Right cardiac atrium (tissue), 5 donors: ENCODE measurements at regions of chr20 and their contacts with region 1.

Region 1: DNA sequence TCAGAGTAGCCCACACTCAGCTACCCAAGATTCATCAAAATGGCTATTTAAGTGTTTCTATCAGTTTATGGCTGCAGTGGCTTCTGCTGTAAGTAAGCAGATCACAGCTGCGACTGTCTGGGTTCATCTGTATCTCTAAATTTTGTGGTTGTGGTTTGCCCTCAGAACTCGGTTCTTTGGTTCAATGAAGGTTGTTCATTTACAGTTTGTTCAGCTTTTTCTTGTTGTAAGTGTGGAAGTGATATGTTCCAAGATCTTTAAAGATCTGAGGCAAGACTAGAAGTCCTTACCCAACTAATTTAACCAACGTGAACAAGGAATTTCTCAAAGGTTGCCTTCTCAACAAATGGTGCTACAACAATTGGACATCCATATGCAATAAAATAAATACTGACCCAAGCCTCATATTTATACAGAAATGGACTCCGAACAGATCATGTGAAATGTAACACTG is 284.3 kb downstream of the DOK5 start:
- DNase-seq: no peak
- ATAC-seq: no peak
- H3K4me3 ChIP-seq: no peak overlapping the region
- H3K27ac ChIP-seq: no peak overlapping the region
- H3K4me1 ChIP-seq: no peaks in the 10 kb centered on the region
- H3K27me3 ChIP-seq: no peaks in the 10 kb centered on the region

Region 2: GRCh38 chr20:54320115-54320607 is 439.6 kb before region 1 on chr20:
- intact Hi-C with region 1: no loop called
- DNase-seq: no peak
- ATAC-seq: no peak
- H3K4me3 ChIP-seq: no peak overlapping the region
- H3K27ac ChIP-seq: no peak overlapping the region
- H3K4me1 ChIP-seq: peaks cover 2% of the 10 kb centered on the region
- H3K27me3 ChIP-seq: no peaks in the 10 kb centered on the region

Region 3: DNA sequence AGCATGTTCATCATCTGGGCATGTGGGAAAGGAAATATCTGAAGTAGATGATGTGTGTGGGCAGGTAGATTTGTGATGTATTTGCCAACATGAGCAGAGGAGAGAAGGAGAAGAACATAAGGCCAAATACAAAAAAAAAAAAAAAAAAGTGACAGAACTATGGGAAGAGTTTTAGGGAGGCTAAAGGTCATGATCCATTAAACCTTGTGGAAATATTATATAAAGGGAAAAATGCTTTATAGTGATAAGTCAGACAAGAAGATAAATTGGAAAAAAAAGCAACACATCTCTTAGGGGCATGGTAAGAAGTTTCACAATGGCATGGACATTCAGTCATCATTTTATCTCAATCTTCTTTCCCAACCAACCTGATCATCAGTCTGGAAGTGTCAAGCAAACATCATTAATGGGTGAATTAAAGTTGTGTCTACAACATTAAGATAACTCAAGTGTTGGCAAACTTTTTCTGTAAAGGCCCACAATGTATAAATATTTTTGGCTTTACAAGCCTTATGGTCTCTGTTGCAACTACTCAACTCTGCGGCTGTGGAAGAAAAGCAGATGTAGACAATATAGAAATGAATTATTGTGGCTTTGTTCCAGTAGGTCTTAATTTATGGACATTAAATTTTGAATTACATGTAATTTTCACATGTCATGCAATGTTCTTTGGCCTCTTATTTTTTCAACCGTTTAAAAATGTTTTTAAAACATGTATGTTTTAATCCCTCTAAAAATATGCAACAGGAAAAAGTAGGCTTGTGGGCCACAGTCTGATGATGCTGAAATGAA is 52.5 kb before region 1 on chr20:
- intact Hi-C with region 1: loop called in 1 of 4 experiments (anchors 10 kb)
- DNase-seq: no peak
- ATAC-seq: no peak
- H3K4me3 ChIP-seq: no peak overlapping the region
- H3K27ac ChIP-seq: no peak overlapping the region
- H3K4me1 ChIP-seq: no peaks in the 10 kb centered on the region
- H3K27me3 ChIP-seq: no peaks in the 10 kb centered on the region

Region 4: DNA sequence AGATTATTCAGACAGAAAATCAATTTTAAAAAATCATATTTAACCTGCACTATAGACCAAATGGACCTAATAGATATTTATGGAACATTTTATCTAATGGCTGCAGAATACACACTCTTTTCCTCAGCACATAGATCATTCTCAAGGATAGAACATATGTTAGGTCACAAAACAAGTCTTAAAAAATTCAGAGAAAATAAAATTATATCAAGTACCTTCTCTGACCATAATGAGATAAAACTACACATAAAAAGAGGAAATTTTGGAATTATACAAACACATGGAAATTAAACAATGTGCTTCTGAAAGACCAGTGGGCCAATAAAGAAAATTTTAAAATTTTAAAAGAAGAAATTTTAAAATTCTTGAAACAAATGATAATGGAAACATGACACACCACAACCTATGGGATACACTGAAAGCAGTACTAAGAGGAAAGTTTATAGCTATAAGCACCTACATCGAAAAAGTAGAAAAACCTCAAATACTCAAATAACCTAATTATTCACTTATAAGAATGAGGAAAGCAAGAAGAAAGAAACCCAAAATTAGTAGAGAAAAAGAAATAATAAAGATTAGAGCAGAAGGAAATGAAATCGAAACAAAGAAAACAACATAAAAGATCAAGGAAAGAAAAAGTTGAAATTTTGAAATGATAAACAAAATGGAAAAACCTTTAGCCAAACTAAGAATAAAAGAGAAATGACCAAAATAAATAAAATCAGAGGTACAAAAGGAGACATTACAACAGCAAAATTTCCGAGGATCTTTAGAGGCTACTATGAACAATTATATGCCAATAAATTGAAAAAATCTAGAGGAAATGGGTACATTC is 145.0 kb after region 1 on chr20:
- intact Hi-C with region 1: no loop called
- DNase-seq: no peak
- ATAC-seq: no peak
- H3K4me3 ChIP-seq: no peak overlapping the region
- H3K27ac ChIP-seq: no peak overlapping the region
- H3K4me1 ChIP-seq: no peaks in the 10 kb centered on the region
- H3K27me3 ChIP-seq: no peaks in the 10 kb centered on the region

Region 5: GRCh38 chr20:55079917-55080316 is 320.2 kb after region 1 on chr20:
- intact Hi-C with region 1: no loop called
- DNase-seq: no peak
- ATAC-seq: no peak
- H3K4me3 ChIP-seq: no peak overlapping the region
- H3K27ac ChIP-seq: no peak overlapping the region
- H3K4me1 ChIP-seq: no peaks in the 10 kb centered on the region
- H3K27me3 ChIP-seq: no peaks in the 10 kb centered on the region

Region 6: GRCh38 chr20:56328853-56329252 is 1569.1 kb after region 1 on chr20:
- intact Hi-C with region 1: no loop called
- DNase-seq: no peak
- ATAC-seq: no peak
- H3K4me3 ChIP-seq: no peak overlapping the region
- H3K27ac ChIP-seq: no peak overlapping the region
- H3K4me1 ChIP-seq: no peaks in the 10 kb centered on the region
- H3K27me3 ChIP-seq: no peaks in the 10 kb centered on the region